MCF 10A (cell line): ENCODE measurements at regions of chr7 and their contacts with region 1.

Region 1: GRCh38 chr7:139016931-139017511 is 18.8 kb downstream of the ZC3HAV1L start:
- DNase-seq: peak; percentile 77
- H3K4me3 Mint-ChIP-seq: no peak overlapping the region
- H3K27ac Mint-ChIP-seq: no peak overlapping the region
- H3K4me1 Mint-ChIP-seq: peaks cover 5% of the 10 kb centered on the region
- H3K27me3 Mint-ChIP-seq: peaks cover 26% of the 10 kb centered on the region
- CTCF ChIP-seq: peak; percentile 62

Region 2: GRCh38 chr7:138981332-138982203 is 35.5 kb before region 1 on chr7 and contains the start of gene KIAA1549:
- CTCF ChIA-PET with region 1: interaction called, 14 read pairs
- POLR2A ChIA-PET with region 1: interaction called, 4 read pairs
- intact Hi-C with region 1: no loop called
- DNase-seq: peak; percentile 65
- H3K4me3 Mint-ChIP-seq: peak within 1 kb of the TSS; percentile 86
- H3K27ac Mint-ChIP-seq: no peak within 1 kb of the TSS
- H3K4me1 Mint-ChIP-seq: peaks cover 29% of the 10 kb centered on the region
- H3K27me3 Mint-ChIP-seq: no peaks in the 10 kb centered on the region
- CTCF ChIP-seq: peak; percentile 31
- total RNA-seq, gene KIAA1549: 7.1 and 8.4 TPM in 2 replicates

Region 3: DNA sequence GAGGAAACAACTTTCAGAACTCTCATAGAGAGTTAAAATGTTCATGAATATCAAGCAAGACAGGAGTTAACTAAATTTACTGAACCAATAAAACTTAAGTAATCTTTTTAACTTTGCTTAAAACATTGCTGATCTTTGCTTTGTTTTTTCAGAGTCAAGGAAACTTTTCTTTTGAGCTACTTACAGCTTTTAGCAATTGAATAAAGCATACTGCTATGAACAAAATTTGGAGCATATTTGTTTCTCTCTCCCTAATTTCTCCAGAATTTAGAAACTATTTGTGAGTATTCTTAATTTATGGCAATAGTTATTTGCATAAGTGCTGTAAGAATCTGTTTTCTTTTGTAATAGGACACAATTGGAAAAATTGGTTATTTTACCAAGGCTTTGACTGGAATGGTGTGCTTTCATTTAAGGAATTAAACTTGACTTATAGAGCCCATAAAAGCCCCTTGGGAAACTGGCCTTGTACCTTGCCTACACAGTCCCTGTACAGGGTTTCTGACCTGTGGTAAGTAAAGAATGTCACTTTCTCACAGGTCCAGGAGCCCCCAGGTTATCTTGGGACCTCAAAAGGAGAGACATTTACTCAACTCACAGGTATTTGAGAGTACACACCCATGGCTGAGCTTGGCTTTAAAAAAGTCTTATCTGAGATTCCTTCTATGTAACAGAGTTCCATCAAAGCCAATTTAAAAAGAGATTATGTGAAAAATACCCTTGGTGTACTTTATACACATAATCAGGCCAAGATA is 12.5 kb before region 1 on chr7:
- CTCF ChIA-PET with region 1: interaction called, 18 read pairs
- POLR2A ChIA-PET with region 1: interaction called, 3 read pairs
- intact Hi-C with region 1: no loop called
- DNase-seq: no peak
- H3K4me3 Mint-ChIP-seq: no peak overlapping the region
- H3K27ac Mint-ChIP-seq: no peak overlapping the region
- H3K4me1 Mint-ChIP-seq: no peaks in the 10 kb centered on the region
- H3K27me3 Mint-ChIP-seq: no peaks in the 10 kb centered on the region
- CTCF ChIP-seq: no peak

Region 4: GRCh38 chr7:139035586-139036353 is 18.7 kb after region 1 on chr7 and contains the start of gene ZC3HAV1L:
- CTCF ChIA-PET with region 1: interaction called, 34 read pairs
- POLR2A ChIA-PET with region 1: interaction called, 6 read pairs
- intact Hi-C with region 1: no loop called
- DNase-seq: peak; percentile 62
- H3K4me3 Mint-ChIP-seq: peak within 1 kb of the TSS; percentile 73
- H3K27ac Mint-ChIP-seq: peak within 1 kb of the TSS; percentile 85
- H3K4me1 Mint-ChIP-seq: peaks cover 21% of the 10 kb centered on the region
- H3K27me3 Mint-ChIP-seq: no peaks in the 10 kb centered on the region
- CTCF ChIP-seq: no peak
- total RNA-seq, gene ZC3HAV1L: 10.9 and 13.7 TPM in 2 replicates

Region 5: DNA sequence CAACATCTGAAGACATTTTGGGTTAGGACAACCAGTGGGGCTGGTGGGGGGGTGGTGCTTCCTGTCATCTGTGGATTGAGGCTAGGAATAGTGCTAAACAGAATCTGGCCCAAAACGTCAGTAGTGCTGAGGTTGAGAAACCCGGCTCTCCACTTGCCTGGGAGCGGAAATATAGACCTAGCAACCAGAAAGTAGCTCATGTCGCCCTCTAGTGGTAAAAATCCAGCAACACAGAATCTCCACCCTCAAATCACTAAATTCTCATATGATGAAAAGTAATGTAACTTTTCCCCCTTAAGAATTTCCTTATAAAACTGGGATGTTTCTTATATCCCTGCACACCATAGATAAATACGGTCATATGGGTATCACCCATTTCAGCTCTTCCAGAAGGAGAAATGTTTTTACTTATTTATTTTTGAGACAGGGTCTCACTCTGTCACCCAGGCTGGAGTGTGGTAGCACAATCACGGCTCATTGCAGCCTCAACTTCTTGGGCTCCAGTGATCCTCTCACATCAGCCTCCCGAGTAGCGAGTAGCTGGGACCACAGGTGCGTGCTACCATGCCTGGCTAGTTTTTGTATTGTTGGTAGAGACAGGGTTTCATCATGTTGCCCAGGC is 58.1 kb after region 1 on chr7:
- CTCF ChIA-PET with region 1: interaction called, 23 read pairs
- POLR2A ChIA-PET with region 1: no interaction called
- intact Hi-C with region 1: loop called (anchors 1 kb)
- DNase-seq: peak; percentile 79
- H3K4me3 Mint-ChIP-seq: no peak overlapping the region
- H3K27ac Mint-ChIP-seq: peak overlapping the region; percentile 27
- H3K4me1 Mint-ChIP-seq: peaks cover 7% of the 10 kb centered on the region
- H3K27me3 Mint-ChIP-seq: no peaks in the 10 kb centered on the region
- CTCF ChIP-seq: peak; percentile 82